Cardiac septum (tissue), 1 donor: ENCODE measurements at regions of chr12 and their contacts with region 1.

Region 1: GRCh38 chr12:124567661-124568373 is 405 bp upstream of the NCOR2 start:
- DNase-seq: peak; percentile 97

Region 2: DNA sequence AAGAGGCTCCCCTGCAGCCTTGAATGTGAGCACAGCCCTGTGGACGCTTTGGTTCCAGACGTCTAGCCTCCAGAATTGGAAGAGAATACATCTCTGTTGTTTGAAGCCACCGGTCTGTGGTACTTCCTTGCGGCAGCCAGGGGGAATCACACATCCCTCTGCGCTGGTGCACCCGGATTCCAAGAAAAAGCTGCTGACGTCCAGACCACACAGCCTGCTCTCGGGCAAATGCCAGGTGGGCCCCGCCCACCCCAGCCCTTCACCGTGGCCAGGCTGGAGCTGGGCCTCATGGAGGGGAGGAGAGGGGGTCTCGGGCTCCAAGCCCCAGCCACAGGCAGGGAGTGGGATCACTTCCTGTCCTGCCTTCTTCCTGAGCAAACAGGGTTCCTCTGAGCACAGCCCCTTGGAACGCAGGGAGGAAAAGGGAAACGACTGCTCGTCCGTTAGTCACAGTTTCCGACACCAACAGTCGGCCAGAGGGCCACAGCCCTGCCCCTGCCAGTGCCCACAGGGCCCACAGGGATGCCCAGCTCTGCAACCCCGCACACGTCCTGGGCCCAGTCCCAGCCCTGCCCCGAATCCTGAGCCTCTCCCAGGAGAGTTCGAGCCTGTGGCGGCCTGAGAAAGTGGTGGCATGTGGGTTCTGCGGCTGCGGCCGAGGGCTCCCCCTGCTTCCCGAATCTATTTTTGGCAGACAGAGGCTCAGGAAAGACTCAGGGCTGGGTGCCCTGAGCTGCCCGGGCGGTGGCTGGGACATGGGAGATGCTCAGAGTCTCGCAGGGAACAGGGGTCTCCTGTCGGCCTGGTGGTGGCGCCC is 187.7 kb before region 1 on chr12:
- intact Hi-C with region 1: loop called (anchors 5 kb)
- DNase-seq: no peak

Region 3: GRCh38 chr12:124453419-124454351 is 114.1 kb before region 1 on chr12:
- intact Hi-C with region 1: loop called (anchors 5 kb)
- DNase-seq: peak; percentile 93

Region 4: GRCh38 chr12:124625867-124626675 is 58.3 kb after region 1 on chr12:
- intact Hi-C with region 1: loop called (anchors 5 kb)
- DNase-seq: peak; percentile 92

Region 5: GRCh38 chr12:124680863-124681778 is 113.3 kb after region 1 on chr12:
- intact Hi-C with region 1: loop called (anchors 1 kb)
- DNase-seq: no peak

Region 6: GRCh38 chr12:124767066-124767821 is 199.4 kb after region 1 on chr12:
- intact Hi-C with region 1: loop called (anchors 1 kb)
- DNase-seq: peak; percentile 92

Region 7: DNA sequence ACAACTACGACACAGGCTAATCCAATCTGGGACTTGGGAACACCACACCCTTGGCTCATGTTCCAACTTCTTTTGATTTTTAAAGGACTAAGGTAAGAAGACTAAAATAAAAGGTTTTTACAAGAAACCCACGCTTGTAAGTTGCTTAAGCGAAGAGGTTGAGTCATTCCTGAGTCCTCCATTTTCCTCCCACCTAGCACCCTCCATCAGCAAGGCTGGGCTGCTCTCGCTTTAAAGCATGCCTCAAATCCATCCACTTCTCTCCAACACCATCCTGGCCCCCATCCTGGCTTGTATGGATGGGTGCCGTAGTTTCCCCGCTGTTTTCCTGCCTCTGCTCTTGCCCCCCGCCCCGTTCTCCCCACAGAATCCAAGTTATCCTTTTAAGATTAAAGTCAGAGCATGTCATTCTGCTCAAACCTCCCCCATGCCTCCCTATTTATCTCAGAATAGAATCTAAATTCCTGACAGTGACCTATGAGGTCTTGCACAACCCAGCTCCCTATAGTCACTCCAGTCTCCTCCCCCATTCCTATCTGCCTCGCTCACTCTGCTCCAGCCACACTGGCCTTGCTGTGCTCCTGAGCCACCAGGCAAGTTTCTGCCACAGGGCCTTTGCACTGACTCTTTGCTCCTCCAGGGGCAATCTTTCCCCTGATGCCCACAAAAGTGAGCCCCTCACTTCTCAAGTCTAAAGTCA is 261.3 kb after region 1 on chr12:
- intact Hi-C with region 1: no loop called
- DNase-seq: no peak

Region 8: DNA sequence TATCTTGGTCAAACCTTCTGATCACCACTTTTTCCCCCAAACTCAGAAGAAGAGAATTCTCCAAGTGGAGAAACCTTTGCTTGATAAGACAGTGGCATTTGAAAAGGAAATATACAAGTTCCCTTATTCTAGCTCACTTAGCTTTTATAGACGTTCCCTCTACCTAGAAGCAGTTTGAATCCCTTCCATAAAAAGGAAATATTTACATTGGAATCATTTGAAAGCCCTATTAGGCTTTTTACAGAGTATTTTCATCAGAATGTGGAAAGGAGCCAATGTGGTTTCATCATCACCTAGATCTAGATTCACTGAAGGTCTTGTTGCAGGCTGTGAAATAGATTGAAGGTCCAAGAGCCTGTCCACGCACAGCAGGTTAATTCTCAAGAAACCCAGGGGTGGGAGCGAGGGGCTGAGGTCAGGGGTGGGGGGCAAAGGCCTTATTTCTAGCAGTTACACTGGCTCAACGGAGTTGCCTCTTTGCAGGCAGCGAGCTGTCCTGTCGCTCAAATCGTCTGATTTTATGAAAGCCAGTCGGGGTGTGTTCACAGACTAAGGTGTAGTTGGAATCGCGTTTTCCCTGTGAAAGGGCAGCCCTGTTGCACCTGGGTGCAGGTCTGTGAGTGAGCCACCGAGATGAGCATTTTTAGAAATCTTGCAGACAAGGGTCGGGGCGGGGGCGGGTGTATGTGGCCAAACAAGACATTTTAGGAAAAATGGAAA is 543.0 kb after region 1 on chr12:
- intact Hi-C with region 1: no loop called
- DNase-seq: no peak